CD8-positive, alpha-beta T cell (primary cell): ENCODE measurements at regions of chr3 and their contacts with region 1.

Region 1: GRCh38 chr3:32467333-32468070 is 35.1 kb downstream of the CMTM6 start:
- DNase-seq: peak; percentile 65 to 91 (median 76)
- ATAC-seq: peak; percentile 90
- H3K4me3 ChIP-seq: peak overlapping the region; percentile 46 to 51
- H3K4me3 Mint-ChIP-seq: peak overlapping the region; percentile 71
- H3K27ac ChIP-seq: peak overlapping the region; percentile 32 to 47
- H3K27ac Mint-ChIP-seq: peak overlapping the region; percentile 87
- H3K4me1 ChIP-seq: peaks cover 22% of the 10 kb centered on the region
- H3K4me1 Mint-ChIP-seq: peaks cover 47% of the 10 kb centered on the region
- H3K27me3 ChIP-seq: no peaks in the 10 kb centered on the region
- H3K27me3 Mint-ChIP-seq: no peaks in the 10 kb centered on the region
- CTCF ChIP-seq: peak; percentile 98

Region 2: GRCh38 chr3:31680072-31680870 is 787.2 kb before region 1 on chr3:
- CTCF ChIA-PET with region 1: no interaction called
- POLR2A ChIA-PET with region 1: no interaction called
- intact Hi-C with region 1: no loop called
- DNase-seq: no peak
- ATAC-seq: no peak
- H3K4me3 ChIP-seq: no peak overlapping the region
- H3K4me3 Mint-ChIP-seq: no peak overlapping the region
- H3K27ac ChIP-seq: no peak overlapping the region
- H3K27ac Mint-ChIP-seq: no peak overlapping the region
- H3K4me1 ChIP-seq: no peaks in the 10 kb centered on the region
- H3K4me1 Mint-ChIP-seq: no peaks in the 10 kb centered on the region
- H3K27me3 ChIP-seq: no peaks in the 10 kb centered on the region
- H3K27me3 Mint-ChIP-seq: no peaks in the 10 kb centered on the region
- CTCF ChIP-seq: no peak

Region 3: GRCh38 chr3:32097768-32098167 is 369.7 kb before region 1 on chr3:
- CTCF ChIA-PET with region 1: no interaction called
- POLR2A ChIA-PET with region 1: no interaction called
- intact Hi-C with region 1: no loop called
- DNase-seq: no peak
- ATAC-seq: no peak
- H3K4me3 ChIP-seq: no peak overlapping the region
- H3K4me3 Mint-ChIP-seq: no peak overlapping the region
- H3K27ac ChIP-seq: no peak overlapping the region
- H3K27ac Mint-ChIP-seq: no peak overlapping the region
- H3K4me1 ChIP-seq: no peaks in the 10 kb centered on the region
- H3K4me1 Mint-ChIP-seq: no peaks in the 10 kb centered on the region
- H3K27me3 ChIP-seq: no peaks in the 10 kb centered on the region
- H3K27me3 Mint-ChIP-seq: peaks cover 8% of the 10 kb centered on the region
- CTCF ChIP-seq: no peak

Region 4: DNA sequence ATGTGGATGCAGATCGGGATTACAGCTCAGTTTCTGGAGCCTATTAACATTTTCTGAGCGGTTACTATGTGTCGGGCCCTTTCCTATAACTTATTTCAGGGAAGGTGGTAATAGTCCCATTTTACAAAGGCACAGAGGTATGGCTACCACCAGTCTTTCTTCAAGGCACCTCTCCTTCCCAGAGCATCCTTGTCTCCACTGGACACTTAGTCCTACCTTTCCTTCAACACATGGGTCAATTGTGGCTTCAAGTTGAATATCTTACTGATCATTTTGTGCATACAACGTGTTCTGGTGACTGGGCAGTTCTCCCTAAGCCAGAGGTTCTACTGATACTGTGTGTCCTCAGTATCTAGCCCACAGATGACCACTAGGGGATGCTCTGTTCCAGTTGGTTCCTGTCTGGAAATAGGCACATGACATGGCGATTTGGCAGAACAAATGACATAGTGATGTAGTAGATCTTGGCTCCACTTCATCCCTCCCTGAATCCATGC is 289.8 kb before region 1 on chr3:
- CTCF ChIA-PET with region 1: interaction called, 9 read pairs
- POLR2A ChIA-PET with region 1: interaction called, 4 read pairs
- intact Hi-C with region 1: loop called (anchors 1 to 5 kb)
- DNase-seq: peak in 8 of 9 experiments; percentile 19 to 58 (median 34)
- ATAC-seq: peak; percentile 59
- H3K4me3 ChIP-seq: no peak overlapping the region
- H3K4me3 Mint-ChIP-seq: peak overlapping the region; percentile 5
- H3K27ac ChIP-seq: no peak overlapping the region
- H3K27ac Mint-ChIP-seq: no peak overlapping the region
- H3K4me1 ChIP-seq: peaks cover 8% of the 10 kb centered on the region
- H3K4me1 Mint-ChIP-seq: peaks cover 10% of the 10 kb centered on the region
- H3K27me3 ChIP-seq: no peaks in the 10 kb centered on the region
- H3K27me3 Mint-ChIP-seq: peaks cover 4% of the 10 kb centered on the region
- CTCF ChIP-seq: no peak

Region 5: GRCh38 chr3:32366638-32367397 is 100.7 kb before region 1 on chr3:
- CTCF ChIA-PET with region 1: interaction called, 225 read pairs
- POLR2A ChIA-PET with region 1: interaction called, 8 read pairs
- intact Hi-C with region 1: no loop called
- DNase-seq: no peak
- ATAC-seq: no peak
- H3K4me3 ChIP-seq: no peak overlapping the region
- H3K4me3 Mint-ChIP-seq: no peak overlapping the region
- H3K27ac ChIP-seq: no peak overlapping the region
- H3K27ac Mint-ChIP-seq: no peak overlapping the region
- H3K4me1 ChIP-seq: peaks cover 11% of the 10 kb centered on the region
- H3K4me1 Mint-ChIP-seq: peaks cover 26% of the 10 kb centered on the region
- H3K27me3 ChIP-seq: no peaks in the 10 kb centered on the region
- H3K27me3 Mint-ChIP-seq: no peaks in the 10 kb centered on the region
- CTCF ChIP-seq: no peak

Region 6: DNA sequence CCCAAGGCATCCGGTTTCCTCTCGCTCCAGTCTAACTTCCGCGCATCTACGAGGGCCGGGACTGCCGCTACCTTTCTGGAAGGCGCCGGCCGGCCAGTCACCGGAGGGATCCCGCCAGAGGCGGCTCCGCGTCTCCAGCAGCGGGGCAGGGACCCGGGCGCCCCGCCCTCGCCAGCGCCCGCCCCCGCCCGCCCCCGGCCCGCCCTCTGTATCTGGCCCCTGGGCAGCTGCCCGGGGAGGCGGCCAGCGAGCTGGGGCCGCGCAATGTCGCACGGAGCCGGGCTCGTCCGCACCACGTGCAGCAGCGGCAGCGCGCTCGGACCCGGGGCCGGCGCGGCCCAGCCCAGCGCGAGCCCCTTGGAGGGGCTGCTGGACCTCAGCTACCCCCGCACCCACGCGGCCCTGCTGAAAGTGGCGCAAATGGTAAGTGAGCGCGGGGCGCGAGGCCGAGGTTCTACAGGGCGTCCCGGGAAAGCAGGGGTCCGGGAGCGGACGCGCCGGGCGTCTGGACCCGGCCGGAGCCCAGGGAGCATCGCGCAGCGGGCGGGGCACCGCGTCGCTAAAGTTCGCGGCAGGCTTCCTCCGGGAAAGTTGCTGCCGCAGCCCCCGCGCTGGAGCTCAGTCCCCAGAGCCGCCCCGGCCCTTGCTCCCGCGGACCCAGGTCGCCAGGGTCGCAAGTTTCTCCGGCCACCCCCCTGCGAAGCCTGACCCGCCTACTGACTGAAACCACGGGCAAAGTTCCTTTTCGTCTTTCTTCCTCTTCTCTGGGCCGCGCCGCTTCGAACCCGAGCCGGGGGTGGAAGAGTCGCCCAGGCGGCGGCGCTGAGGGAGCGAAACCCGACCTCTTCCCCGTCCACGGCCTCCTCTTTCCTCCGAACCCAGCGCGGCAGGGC is 75.6 kb before region 1 on chr3 and contains the start of gene CMTM7:
- CTCF ChIA-PET with region 1: interaction called, 105 read pairs
- POLR2A ChIA-PET with region 1: interaction called, 9 read pairs
- intact Hi-C with region 1: no loop called
- DNase-seq: peak; percentile 26 to 79 (median 61)
- ATAC-seq: peak; percentile 63
- H3K4me3 ChIP-seq: peak within 1 kb of the TSS; percentile 69 to 70
- H3K4me3 Mint-ChIP-seq: peak within 1 kb of the TSS; percentile 97
- H3K27ac ChIP-seq: peak within 1 kb of the TSS; percentile 73 to 77
- H3K27ac Mint-ChIP-seq: peak within 1 kb of the TSS; percentile 98
- H3K4me1 ChIP-seq: peaks cover 29% of the 10 kb centered on the region
- H3K4me1 Mint-ChIP-seq: peaks cover 65% of the 10 kb centered on the region
- H3K27me3 ChIP-seq: no peaks in the 10 kb centered on the region
- H3K27me3 Mint-ChIP-seq: no peaks in the 10 kb centered on the region
- CTCF ChIP-seq: no peak
- total RNA-seq, gene CMTM7: 18.8 to 19.5 TPM

Region 7: GRCh38 chr3:32420126-32421038 is 47.1 kb before region 1 on chr3:
- CTCF ChIA-PET with region 1: interaction called, 70 read pairs
- POLR2A ChIA-PET with region 1: interaction called, 6 read pairs
- intact Hi-C with region 1: no loop called
- DNase-seq: peak in 4 of 9 experiments; percentile 30 to 59 (median 49)
- ATAC-seq: peak; percentile 60
- H3K4me3 ChIP-seq: peak overlapping the region in 1 of 2 experiments; percentile 0
- H3K4me3 Mint-ChIP-seq: peak overlapping the region; percentile 73
- H3K27ac ChIP-seq: peak overlapping the region; percentile 15 to 54
- H3K27ac Mint-ChIP-seq: peak overlapping the region; percentile 98
- H3K4me1 ChIP-seq: peaks cover 91% of the 10 kb centered on the region
- H3K4me1 Mint-ChIP-seq: peaks cover 93% of the 10 kb centered on the region
- H3K27me3 ChIP-seq: no peaks in the 10 kb centered on the region
- H3K27me3 Mint-ChIP-seq: no peaks in the 10 kb centered on the region
- CTCF ChIP-seq: no peak

Region 8: GRCh38 chr3:32448686-32449474 is 18.6 kb before region 1 on chr3:
- CTCF ChIA-PET with region 1: interaction called, 66 read pairs
- POLR2A ChIA-PET with region 1: no interaction called
- intact Hi-C with region 1: no loop called
- DNase-seq: no peak
- ATAC-seq: no peak
- H3K4me3 ChIP-seq: no peak overlapping the region
- H3K4me3 Mint-ChIP-seq: no peak overlapping the region
- H3K27ac ChIP-seq: no peak overlapping the region
- H3K27ac Mint-ChIP-seq: no peak overlapping the region
- H3K4me1 ChIP-seq: peaks cover 11% of the 10 kb centered on the region
- H3K4me1 Mint-ChIP-seq: peaks cover 44% of the 10 kb centered on the region
- H3K27me3 ChIP-seq: no peaks in the 10 kb centered on the region
- H3K27me3 Mint-ChIP-seq: no peaks in the 10 kb centered on the region
- CTCF ChIP-seq: no peak